PC-9 (cell line): ENCODE measurements at regions of chr6 and their contacts with region 1.

Region 1: GRCh38 chr6:83514866-83515466 is 2.6 kb downstream of the PRSS35 start:
- DNase-seq: peak; percentile 27 to 55
- H3K4me3 ChIP-seq: no peak overlapping the region
- H3K27ac ChIP-seq: no peak overlapping the region
- H3K4me1 ChIP-seq: no peaks in the 10 kb centered on the region
- H3K27me3 ChIP-seq: no peaks in the 10 kb centered on the region
- CTCF ChIP-seq: peak; percentile 85

Region 2: DNA sequence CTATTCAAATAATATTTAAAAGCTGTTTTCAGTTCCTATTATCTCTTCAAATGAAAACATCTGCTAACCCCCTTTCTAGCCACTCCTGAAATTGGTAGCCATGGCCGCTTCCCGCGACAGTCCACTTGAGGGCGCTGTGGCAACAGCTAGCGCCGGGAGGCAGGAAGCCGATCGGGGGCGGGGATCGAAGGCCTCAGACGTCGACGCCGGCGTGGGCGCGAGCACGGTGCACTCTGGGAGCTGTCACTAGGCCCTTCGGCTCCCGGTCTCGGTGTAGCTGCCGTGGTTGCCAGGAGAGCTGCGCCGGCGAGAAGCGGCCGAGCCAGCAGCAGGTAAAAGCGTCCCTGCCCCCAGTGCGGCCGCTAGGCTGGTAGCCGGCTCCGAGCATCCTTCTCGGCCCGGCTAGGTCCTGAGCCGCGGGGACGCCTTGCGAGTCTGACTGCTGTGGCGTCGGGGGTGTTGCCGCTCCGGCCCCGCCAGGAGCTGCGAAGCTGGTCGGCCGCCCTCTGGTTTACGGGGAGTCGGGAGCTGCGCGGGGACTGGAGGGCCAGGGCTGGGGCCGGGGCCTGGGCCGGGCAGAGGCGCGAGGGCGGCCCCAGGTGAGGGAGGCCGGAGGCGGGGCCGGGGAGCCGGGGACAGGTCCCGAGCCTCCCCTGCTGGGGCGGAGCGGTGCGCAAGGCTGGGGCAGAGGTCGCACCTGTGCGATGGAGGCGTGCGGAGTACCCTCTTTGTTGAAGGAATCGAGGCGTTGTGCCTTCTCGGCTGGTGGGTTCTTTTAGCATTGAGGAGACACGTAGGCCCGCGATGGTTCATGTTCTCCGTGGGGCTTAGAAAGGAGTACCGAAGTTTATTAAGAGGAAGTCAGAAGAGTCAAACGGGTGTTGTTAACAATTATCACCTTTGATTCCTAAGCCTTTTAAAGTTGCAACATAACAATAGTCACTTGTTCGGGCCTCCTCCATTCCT is 447.2 kb before region 1 on chr6 and contains the start of gene DOP1A:
- CTCF ChIA-PET with region 1: interaction called, 12 read pairs
- POLR2A ChIA-PET with region 1: no interaction called
- intact Hi-C with region 1: loop called (anchors 1 kb)
- DNase-seq: peak; percentile 81 to 93
- H3K4me3 ChIP-seq: peak within 1 kb of the TSS; percentile 95
- H3K27ac ChIP-seq: peak within 1 kb of the TSS; percentile 70
- H3K4me1 ChIP-seq: peaks cover 12% of the 10 kb centered on the region
- H3K27me3 ChIP-seq: no peaks in the 10 kb centered on the region
- CTCF ChIP-seq: peak; percentile 86
- total RNA-seq, gene DOP1A: 3.9 and 4.1 TPM in 2 replicates

Region 3: GRCh38 chr6:83403191-83403590 is 111.8 kb before region 1 on chr6:
- CTCF ChIA-PET with region 1: interaction called, 11 read pairs
- POLR2A ChIA-PET with region 1: no interaction called
- intact Hi-C with region 1: no loop called
- DNase-seq: no peak
- H3K4me3 ChIP-seq: no peak overlapping the region
- H3K27ac ChIP-seq: no peak overlapping the region
- H3K4me1 ChIP-seq: no peaks in the 10 kb centered on the region
- H3K27me3 ChIP-seq: no peaks in the 10 kb centered on the region
- CTCF ChIP-seq: no peak

Region 4: GRCh38 chr6:83424392-83425018 is 90.5 kb before region 1 on chr6:
- CTCF ChIA-PET with region 1: interaction called, 21 read pairs
- POLR2A ChIA-PET with region 1: no interaction called
- intact Hi-C with region 1: no loop called
- DNase-seq: no peak
- H3K4me3 ChIP-seq: no peak overlapping the region
- H3K27ac ChIP-seq: no peak overlapping the region
- H3K4me1 ChIP-seq: peaks cover 24% of the 10 kb centered on the region
- H3K27me3 ChIP-seq: no peaks in the 10 kb centered on the region
- CTCF ChIP-seq: no peak

Region 5: DNA sequence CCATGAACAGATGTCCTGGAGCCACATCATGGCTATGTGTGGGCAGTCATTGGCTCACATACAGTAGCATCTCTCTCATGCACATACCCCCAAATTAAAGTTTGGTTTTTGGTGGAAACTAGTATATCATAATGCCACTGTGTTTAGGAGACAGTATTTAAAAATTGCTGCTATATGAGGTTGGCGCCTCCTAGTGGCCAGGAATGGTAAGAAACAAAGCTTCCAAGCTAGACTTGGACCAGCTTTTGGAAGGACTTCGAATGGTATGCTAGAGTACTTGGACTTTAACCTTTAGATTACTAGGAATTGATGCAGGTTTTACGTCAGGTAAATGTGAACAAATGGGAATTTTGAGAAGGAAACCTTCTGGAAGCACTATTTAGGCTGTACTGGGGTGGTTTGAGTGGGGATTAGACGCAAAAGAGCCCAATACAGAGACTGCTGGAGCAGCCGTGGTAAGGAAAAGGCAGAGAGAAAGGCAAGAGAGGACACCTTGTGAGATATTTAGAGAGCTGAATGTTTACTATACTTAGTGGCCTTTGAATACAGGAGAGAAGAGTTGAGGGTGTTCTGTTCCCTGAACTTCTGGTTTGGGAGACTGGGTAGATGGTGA is 21.2 kb after region 1 on chr6:
- CTCF ChIA-PET with region 1: interaction called, 10 read pairs
- POLR2A ChIA-PET with region 1: no interaction called
- intact Hi-C with region 1: no loop called
- DNase-seq: peak; percentile 22 to 34
- H3K4me3 ChIP-seq: no peak overlapping the region
- H3K27ac ChIP-seq: no peak overlapping the region
- H3K4me1 ChIP-seq: no peaks in the 10 kb centered on the region
- H3K27me3 ChIP-seq: no peaks in the 10 kb centered on the region
- CTCF ChIP-seq: peak; percentile 80